ENCODE measurements at regions of chr3 and their contacts with region 1.

Region 1: GRCh38 chr3:10263646-10264363 is 15.5 kb downstream of the TATDN2 start:
- DNase-seq: peak; percentile 75
- H3K4me3 ChIP-seq: no peak overlapping the region
- H3K27ac ChIP-seq: peak overlapping the region; percentile 6 to 15; a peak in 2 of 4 replicates
- H3K4me1 ChIP-seq: peaks cover 0 to 2% of the 10 kb centered on the region in 2 experiments; a peak in 1 of 4 replicates
- H3K27me3 ChIP-seq: no peaks in the 10 kb centered on the region
- CTCF ChIP-seq: peak; percentile 55
- EP300 ChIP-seq: no peak
- RAD21 ChIP-seq: no peak; the same call in 1 of the 2 replicates

Region 2: DNA sequence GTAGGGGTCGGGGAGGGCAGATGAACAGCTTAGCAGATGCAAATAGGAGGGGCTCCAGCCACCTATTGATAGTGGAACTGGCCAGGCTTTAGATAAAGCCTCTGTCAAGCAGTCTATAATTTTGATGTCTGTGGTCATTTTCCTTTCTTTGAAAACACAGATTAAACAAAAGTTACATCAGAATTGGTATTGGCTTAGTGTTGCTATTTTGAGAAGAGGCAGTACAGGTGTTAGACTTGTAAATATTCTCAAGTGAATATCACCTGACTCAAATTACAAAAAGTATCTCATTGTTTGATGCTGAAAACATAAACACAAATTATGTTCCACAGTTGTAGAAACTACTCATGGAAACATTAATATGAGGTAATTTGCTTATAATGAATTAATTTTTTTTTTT is 10.8 kb after region 1 on chr3:
- CTCF ChIA-PET with region 1: interaction called, 14 read pairs
- POLR2A ChIA-PET with region 1: no interaction called
- DNase-seq: no peak
- H3K4me3 ChIP-seq: no peak overlapping the region
- H3K27ac ChIP-seq: no peak overlapping the region
- H3K4me1 ChIP-seq: peaks cover 4 to 6% of the 10 kb centered on the region in 2 experiments; a peak in 2 of 4 replicates
- H3K27me3 ChIP-seq: no peaks in the 10 kb centered on the region
- CTCF ChIP-seq: no peak
- EP300 ChIP-seq: no peak
- RAD21 ChIP-seq: no peak

Region 3: GRCh38 chr3:10280177-10280529 is 16.3 kb after region 1 on chr3:
- CTCF ChIA-PET with region 1: interaction called, 14 read pairs
- POLR2A ChIA-PET with region 1: interaction called, 3 read pairs
- DNase-seq: no peak
- H3K4me3 ChIP-seq: no peak overlapping the region
- H3K27ac ChIP-seq: no peak overlapping the region
- H3K4me1 ChIP-seq: peaks cover 0 to 21% of the 10 kb centered on the region in 2 experiments; a peak in 1 of 4 replicates
- H3K27me3 ChIP-seq: no peaks in the 10 kb centered on the region
- CTCF ChIP-seq: no peak; the same call in 1 of the 2 replicates
- EP300 ChIP-seq: no peak
- RAD21 ChIP-seq: no peak